GM12878 (cell line): ENCODE measurements at regions of chr17 and their contacts with region 1.

Region 1: GRCh38 chr17:61002316-61002736 is 324.7 kb downstream of the BCAS3 start:
- DNase-seq: no peak
- ATAC-seq: peak; percentile 45; the same call in 2 of the 3 replicates
- H3K4me3 ChIP-seq: no peak overlapping the region
- H3K27ac ChIP-seq: no peak overlapping the region
- H3K4me1 ChIP-seq: no peaks in the 10 kb centered on the region
- H3K27me3 ChIP-seq: no peaks in the 10 kb centered on the region
- CTCF ChIP-seq: peak; percentile 34 to 57 (median 37); a peak in 5 of 6 replicates
- EP300 ChIP-seq: no peak
- POLR2A ChIP-seq: no peak
- RAD21 ChIP-seq: peak; percentile 74

Region 2: DNA sequence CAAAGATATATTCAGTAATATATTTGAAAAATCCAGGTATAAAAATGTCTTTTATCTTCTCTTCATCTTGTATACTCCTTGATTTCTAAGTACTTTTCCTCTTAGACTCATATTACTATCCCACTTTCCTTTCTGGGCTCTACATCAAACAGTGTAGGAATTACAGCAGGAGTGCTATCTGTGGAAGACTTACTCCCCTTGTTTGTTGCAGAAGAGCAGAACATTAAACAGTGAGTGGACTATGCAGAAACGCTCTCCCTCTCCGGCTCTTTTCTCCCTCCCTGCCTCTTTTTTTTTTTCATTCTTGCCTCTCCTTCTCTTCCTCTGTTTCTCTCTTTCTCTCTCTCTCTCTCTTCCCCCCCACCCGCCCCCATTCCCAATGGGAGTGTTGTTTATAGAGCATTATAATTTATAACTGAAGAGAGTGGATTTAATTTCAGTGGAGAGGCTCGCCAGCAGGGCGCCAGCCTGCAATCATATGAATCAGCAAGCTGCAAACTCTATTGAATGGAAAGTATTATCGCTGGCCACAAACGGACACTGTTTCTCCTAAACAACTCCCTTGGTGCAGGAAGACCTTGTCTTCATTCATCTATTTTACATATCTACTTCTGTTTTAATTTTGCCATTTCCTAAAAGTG is 155.0 kb after region 1 on chr17:
- CTCF ChIA-PET with region 1: no interaction called
- POLR2A ChIA-PET with region 1: no interaction called
- RAD21 ChIA-PET with region 1: no interaction called
- SMC1A ChIA-PET with region 1: no interaction called
- in situ Hi-C with region 1: no loop called
- intact Hi-C with region 1: loop called (anchors 10 kb)
- DNase-seq: no peak
- ATAC-seq: no peak
- H3K4me3 ChIP-seq: no peak overlapping the region
- H3K27ac ChIP-seq: no peak overlapping the region
- H3K4me1 ChIP-seq: no peaks in the 10 kb centered on the region
- H3K27me3 ChIP-seq: no peaks in the 10 kb centered on the region
- CTCF ChIP-seq: no peak
- EP300 ChIP-seq: no peak
- POLR2A ChIP-seq: no peak
- RAD21 ChIP-seq: no peak

Region 3: GRCh38 chr17:61235827-61236197 is 233.5 kb after region 1 on chr17:
- CTCF ChIA-PET with region 1: no interaction called
- POLR2A ChIA-PET with region 1: no interaction called
- RAD21 ChIA-PET with region 1: no interaction called
- SMC1A ChIA-PET with region 1: interaction called, 3 read pairs
- in situ Hi-C with region 1: no loop called
- intact Hi-C with region 1: loop called (anchors 10 kb)
- DNase-seq: no peak
- ATAC-seq: no peak
- H3K4me3 ChIP-seq: no peak overlapping the region
- H3K27ac ChIP-seq: no peak overlapping the region
- H3K4me1 ChIP-seq: no peaks in the 10 kb centered on the region
- H3K27me3 ChIP-seq: no peaks in the 10 kb centered on the region
- CTCF ChIP-seq: no peak
- EP300 ChIP-seq: no peak
- POLR2A ChIP-seq: no peak
- RAD21 ChIP-seq: no peak

Region 4: DNA sequence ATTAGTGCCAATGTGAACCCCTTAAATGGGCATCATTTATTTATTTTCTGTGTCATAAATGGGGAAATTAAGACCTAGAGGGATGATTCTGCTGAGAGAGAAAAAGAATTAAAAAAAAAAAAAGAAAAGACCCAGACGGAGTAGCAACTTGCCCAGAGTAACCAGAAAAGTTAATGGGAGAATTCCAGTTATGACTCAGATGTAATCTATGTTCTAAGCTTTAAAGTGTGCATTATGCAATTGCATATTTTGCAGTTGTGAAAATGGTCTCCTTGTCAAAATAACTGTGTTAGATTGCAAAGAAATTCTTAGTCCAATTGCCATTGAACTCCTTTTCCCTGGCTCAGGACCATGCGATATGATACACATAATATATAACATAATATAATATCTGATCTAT is 358.8 kb after region 1 on chr17:
- CTCF ChIA-PET with region 1: interaction called, 5 read pairs
- POLR2A ChIA-PET with region 1: no interaction called
- RAD21 ChIA-PET with region 1: interaction called, 11 read pairs
- SMC1A ChIA-PET with region 1: interaction called, 4 read pairs
- in situ Hi-C with region 1: no loop called
- intact Hi-C with region 1: loop called (anchors 1 kb)
- DNase-seq: no peak
- ATAC-seq: no peak
- H3K4me3 ChIP-seq: no peak overlapping the region
- H3K27ac ChIP-seq: no peak overlapping the region
- H3K4me1 ChIP-seq: no peaks in the 10 kb centered on the region
- H3K27me3 ChIP-seq: no peaks in the 10 kb centered on the region
- CTCF ChIP-seq: no peak
- EP300 ChIP-seq: no peak
- POLR2A ChIP-seq: no peak
- RAD21 ChIP-seq: no peak

Region 5: GRCh38 chr17:61389670-61390478 is 387.5 kb after region 1 on chr17:
- CTCF ChIA-PET with region 1: no interaction called
- POLR2A ChIA-PET with region 1: no interaction called
- RAD21 ChIA-PET with region 1: no interaction called
- SMC1A ChIA-PET with region 1: no interaction called
- in situ Hi-C with region 1: no loop called
- intact Hi-C with region 1: loop called (anchors 1 kb)
- DNase-seq: no peak
- ATAC-seq: peak; percentile 88
- H3K4me3 ChIP-seq: no peak overlapping the region
- H3K27ac ChIP-seq: no peak overlapping the region
- H3K4me1 ChIP-seq: no peaks in the 10 kb centered on the region
- H3K27me3 ChIP-seq: no peaks in the 10 kb centered on the region; a peak in 2 of 4 replicates
- CTCF ChIP-seq: peak; percentile 67 to 94 (median 76)
- EP300 ChIP-seq: no peak
- POLR2A ChIP-seq: no peak
- RAD21 ChIP-seq: peak; percentile 77